Activated naive CD4-positive, alpha-beta T cell treated with anti-CD3 and anti-CD28 coated beads for 36 hours (primary cell): ENCODE measurements at regions of chr1 and their contacts with region 1.

Region 1: GRCh38 chr1:147890177-147890790 is 12.3 kb upstream of the GJA8 start:
- DNase-seq: peak; percentile 83
- H3K4me3 Mint-ChIP-seq: no peak overlapping the region
- H3K27ac Mint-ChIP-seq: no peak overlapping the region
- H3K4me1 Mint-ChIP-seq: peaks cover 2% of the 10 kb centered on the region
- H3K27me3 Mint-ChIP-seq: no peaks in the 10 kb centered on the region

Region 2: DNA sequence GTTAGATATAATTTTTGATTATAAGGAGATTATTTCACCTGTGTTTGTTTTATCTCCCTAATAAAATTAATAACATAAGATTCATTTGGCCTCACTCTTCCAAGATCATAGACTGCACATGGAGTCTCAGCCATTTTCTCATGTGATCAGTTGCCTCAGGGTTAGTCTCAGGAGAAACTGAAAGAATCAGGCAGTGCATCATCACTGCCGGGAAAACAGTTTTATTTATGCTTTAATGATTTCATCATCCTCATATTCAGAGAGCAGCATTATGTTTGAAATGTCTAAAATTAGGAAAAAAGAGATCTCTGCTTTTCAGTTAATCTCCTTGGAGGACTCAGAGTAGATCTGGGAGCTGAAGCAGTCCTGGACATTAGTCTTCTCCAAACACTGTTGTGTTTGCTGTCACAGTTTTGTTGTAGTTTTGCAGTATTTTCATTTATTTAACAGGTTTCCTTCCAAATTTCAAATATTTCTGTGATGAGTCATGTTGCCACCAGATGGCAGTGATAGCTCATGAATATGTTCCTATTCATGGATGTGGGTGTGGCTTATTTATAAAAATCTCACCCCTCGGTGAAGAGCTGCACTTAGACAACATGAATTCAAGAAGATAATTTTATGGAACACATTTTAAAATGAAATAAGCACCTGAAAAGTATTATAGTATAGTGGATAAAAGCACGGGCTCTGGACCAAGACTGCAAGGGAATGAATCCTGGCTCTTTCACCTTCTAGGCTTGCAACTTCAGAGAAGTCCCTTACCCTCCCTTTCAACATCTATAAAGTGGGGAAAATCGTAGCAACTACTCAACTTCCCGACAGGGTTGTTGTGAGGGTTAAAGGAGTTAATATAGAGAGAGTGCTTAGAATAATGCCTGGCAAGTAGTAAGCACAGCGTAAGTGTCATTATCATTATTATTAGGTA is 616.6 kb before region 1 on chr1:
- CTCF ChIA-PET with region 1: no interaction called
- intact Hi-C with region 1: loop called (anchors 5 kb)
- DNase-seq: peak; percentile 42
- H3K4me3 Mint-ChIP-seq: no peak overlapping the region
- H3K27ac Mint-ChIP-seq: no peak overlapping the region
- H3K4me1 Mint-ChIP-seq: peaks cover 6% of the 10 kb centered on the region
- H3K27me3 Mint-ChIP-seq: no peaks in the 10 kb centered on the region

Region 3: DNA sequence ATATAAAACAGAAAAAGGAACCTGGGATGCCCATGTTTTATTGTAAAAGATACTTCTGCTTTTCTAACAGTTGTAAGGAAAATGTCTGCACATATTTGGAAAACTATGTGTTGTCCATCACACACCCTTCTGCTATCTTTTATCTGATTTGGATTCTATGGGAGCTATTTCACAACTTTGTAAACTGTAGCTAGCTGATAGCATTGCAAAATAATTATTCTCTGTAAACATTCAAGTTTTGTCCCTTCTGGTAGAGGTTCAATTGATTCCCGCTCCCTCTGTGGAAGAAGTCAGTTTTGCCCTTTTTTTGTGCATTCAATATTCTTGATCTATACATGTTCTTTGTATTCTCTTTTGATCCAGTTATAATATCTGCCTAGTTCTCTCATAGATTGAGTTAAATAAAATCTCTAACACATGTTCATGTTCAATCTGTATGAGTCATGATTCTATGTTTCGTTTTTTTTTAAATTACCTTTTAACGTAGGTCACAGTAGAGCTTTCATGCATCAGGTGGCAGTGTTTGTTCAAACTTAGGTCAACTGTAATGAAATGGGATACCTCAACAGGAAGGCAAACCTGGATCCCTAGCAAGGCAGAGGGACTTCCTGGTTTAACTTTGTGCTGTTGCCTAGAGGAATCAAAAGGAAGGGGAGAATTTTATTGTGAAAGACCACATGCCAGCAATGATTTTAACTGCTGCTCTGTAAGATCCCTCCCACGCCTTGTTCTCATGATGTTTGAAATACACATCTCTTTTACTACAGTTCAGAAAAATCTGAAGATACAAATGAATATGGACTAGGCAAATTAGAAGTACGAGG is 375.0 kb before region 1 on chr1:
- CTCF ChIA-PET with region 1: interaction called, 12 read pairs
- intact Hi-C with region 1: loop called (anchors 5 kb)
- DNase-seq: peak; percentile 24
- H3K4me3 Mint-ChIP-seq: no peak overlapping the region
- H3K27ac Mint-ChIP-seq: no peak overlapping the region
- H3K4me1 Mint-ChIP-seq: peaks cover 12% of the 10 kb centered on the region
- H3K27me3 Mint-ChIP-seq: peaks cover 4% of the 10 kb centered on the region

Region 4: GRCh38 chr1:147640553-147641165 is 249.6 kb before region 1 on chr1:
- CTCF ChIA-PET with region 1: interaction called, 27 read pairs
- intact Hi-C with region 1: loop called (anchors 1 kb)
- DNase-seq: peak; percentile 89
- H3K4me3 Mint-ChIP-seq: no peak overlapping the region
- H3K27ac Mint-ChIP-seq: no peak overlapping the region
- H3K4me1 Mint-ChIP-seq: peaks cover 11% of the 10 kb centered on the region
- H3K27me3 Mint-ChIP-seq: no peaks in the 10 kb centered on the region

Region 5: GRCh38 chr1:147723691-147724323 is 166.5 kb before region 1 on chr1:
- CTCF ChIA-PET with region 1: interaction called, 8 read pairs
- intact Hi-C with region 1: loop called (anchors 1 kb)
- DNase-seq: peak; percentile 43
- H3K4me3 Mint-ChIP-seq: no peak overlapping the region
- H3K27ac Mint-ChIP-seq: no peak overlapping the region
- H3K4me1 Mint-ChIP-seq: peaks cover 3% of the 10 kb centered on the region
- H3K27me3 Mint-ChIP-seq: no peaks in the 10 kb centered on the region

Region 6: GRCh38 chr1:147904726-147905125 is 14.4 kb after region 1 on chr1:
- CTCF ChIA-PET with region 1: interaction called, 15 read pairs
- intact Hi-C with region 1: no loop called
- DNase-seq: no peak
- H3K4me3 Mint-ChIP-seq: no peak overlapping the region
- H3K27ac Mint-ChIP-seq: no peak overlapping the region
- H3K4me1 Mint-ChIP-seq: peaks cover 6% of the 10 kb centered on the region
- H3K27me3 Mint-ChIP-seq: no peaks in the 10 kb centered on the region

Region 7: GRCh38 chr1:148160343-148161052 is 270.2 kb after region 1 on chr1:
- CTCF ChIA-PET with region 1: no interaction called
- intact Hi-C with region 1: no loop called
- DNase-seq: no peak
- H3K4me3 Mint-ChIP-seq: no peak overlapping the region
- H3K27ac Mint-ChIP-seq: no peak overlapping the region
- H3K4me1 Mint-ChIP-seq: peaks cover 10% of the 10 kb centered on the region
- H3K27me3 Mint-ChIP-seq: peaks cover 14% of the 10 kb centered on the region